Head of caudate nucleus (tissue), 42 donors: ENCODE measurements at regions of chr3 and their contacts with region 1.

Region 1: DNA sequence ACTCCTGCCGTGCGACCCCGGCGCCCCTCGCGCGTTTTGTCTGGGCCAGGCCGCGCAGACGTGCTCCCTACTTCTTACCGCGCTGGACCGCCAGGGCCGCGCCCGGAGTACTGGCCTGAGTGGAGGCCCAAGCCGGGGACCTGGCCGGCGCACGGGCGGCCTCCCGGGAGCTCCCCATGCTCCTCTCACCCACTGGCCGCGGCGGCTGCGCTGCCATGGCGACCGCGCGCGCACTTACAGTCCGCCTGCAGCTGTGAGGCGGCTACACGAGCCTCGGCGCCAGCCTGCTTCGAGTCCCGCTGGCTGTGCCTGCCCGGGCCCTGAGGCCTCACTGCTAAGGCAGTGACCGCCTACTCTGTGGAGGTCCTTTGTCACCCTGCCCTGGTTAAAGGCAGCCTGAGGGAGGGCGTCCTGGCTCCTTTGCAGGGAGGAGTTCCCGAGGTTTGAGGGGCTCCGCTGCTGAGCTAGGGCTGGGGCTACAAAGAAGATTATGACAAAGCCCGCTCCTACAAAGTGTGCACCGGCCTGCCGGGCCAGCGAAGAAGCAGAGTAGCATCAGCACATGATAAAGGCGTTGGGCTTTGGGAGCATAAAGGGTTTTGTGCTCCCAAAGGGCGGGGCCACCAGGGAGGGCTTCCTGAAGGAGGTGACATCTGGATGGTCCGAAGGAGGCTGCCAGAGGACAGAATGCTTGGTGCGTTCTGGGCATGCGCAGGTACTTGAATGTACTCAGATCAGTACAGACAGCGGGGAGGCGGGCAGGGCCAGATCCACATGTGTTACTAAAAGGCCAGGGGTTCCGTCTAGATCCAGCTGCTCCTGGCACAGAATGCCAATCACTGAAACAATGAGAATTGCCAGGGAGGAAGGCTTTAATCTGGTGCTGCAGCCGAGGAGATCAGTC is at the starts of genes LRRC34 and LRRIQ4:
- DNase-seq: peak; percentile 54 to 91 (median 76)

Region 2: GRCh38 chr3:169686874-169687273 is 125.7 kb before region 1 on chr3:
- intact Hi-C with region 1: no loop called
- DNase-seq: no peak

Region 3: GRCh38 chr3:169966428-169966950 is 153.9 kb after region 1 on chr3 and contains the start of gene SEC62:
- intact Hi-C with region 1: loop called (anchors 5 kb)
- DNase-seq: peak; percentile 87 to 98 (median 95)

Region 4: DNA sequence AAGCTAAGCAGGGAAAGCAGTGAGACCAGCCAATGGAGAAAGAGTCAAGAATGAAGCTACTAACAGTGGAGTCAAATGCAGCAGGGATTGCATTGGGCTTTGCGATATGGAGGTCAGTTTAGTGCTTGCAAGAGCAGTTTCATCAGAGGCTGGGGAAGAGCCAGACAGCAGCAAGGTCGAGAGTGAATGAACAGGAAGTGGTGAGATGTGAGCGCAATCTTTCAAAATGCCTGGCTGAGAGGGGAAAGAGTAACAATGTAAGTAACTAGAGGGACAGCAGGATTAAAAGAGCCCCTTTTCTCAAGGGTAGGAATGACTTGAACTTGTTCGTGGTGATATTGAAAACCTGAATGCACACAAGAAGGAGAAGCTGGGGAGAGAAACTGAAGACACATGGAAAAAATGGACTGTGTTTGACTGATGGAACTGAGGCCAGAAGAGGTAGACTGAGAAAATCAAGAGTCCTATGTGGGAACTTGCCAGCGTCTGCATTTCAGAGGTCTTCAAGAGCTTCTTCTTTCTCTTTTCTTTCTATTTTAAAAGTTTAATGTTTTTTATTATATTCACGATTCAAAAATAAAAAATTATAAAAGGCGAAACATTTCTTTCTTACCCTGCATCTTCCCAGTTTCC is 194.6 kb after region 1 on chr3:
- intact Hi-C with region 1: no loop called
- DNase-seq: peak in 5 of 42 donors; percentile 16 to 31 (median 18)